ENCODE measurements at regions of chr3 and their contacts with region 1.

Region 1: DNA sequence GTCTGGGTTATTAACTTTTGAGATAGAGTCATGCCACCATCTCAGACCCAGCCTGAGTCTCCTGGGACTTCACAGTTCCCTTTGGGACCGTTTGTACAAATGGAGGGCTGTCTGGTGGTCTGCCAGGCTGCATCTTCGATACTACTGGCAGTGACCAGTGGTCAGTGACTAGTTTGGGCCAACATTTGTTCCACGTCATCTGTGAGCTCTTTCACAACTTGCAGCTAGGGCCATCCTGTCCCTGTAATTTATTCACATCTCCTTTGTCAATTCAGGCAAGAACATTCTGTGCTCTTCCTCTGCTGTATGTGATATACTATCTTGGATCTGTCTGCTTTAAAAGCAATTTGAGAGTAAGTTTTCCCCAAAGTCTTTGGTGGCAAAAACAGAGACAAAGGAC is 353.3 kb downstream of the EPHB1 start:
- DNase-seq: no peak
- H3K4me3 ChIP-seq: no peak overlapping the region
- H3K27ac ChIP-seq: no peak overlapping the region
- H3K4me1 ChIP-seq: no peaks in the 10 kb centered on the region
- H3K27me3 ChIP-seq: peaks cover 15% of the 10 kb centered on the region
- CTCF ChIP-seq: no peak

Region 2: GRCh38 chr3:134985864-134986715 is 162.3 kb before region 1 on chr3:
- CTCF ChIA-PET with region 1: no interaction called
- POLR2A ChIA-PET with region 1: no interaction called
- intact Hi-C with region 1: no loop called
- DNase-seq: no peak
- H3K4me3 ChIP-seq: no peak overlapping the region
- H3K27ac ChIP-seq: no peak overlapping the region
- H3K4me1 ChIP-seq: no peaks in the 10 kb centered on the region
- H3K27me3 ChIP-seq: peaks cover 7% of the 10 kb centered on the region
- CTCF ChIP-seq: no peak

Region 3: GRCh38 chr3:135272026-135272669 is 123.8 kb after region 1 on chr3:
- CTCF ChIA-PET with region 1: no interaction called
- POLR2A ChIA-PET with region 1: no interaction called
- intact Hi-C with region 1: no loop called
- DNase-seq: no peak
- H3K4me3 ChIP-seq: no peak overlapping the region
- H3K27ac ChIP-seq: no peak overlapping the region
- H3K4me1 ChIP-seq: no peaks in the 10 kb centered on the region
- H3K27me3 ChIP-seq: peaks cover 6% of the 10 kb centered on the region
- CTCF ChIP-seq: no peak

Region 4: GRCh38 chr3:135304378-135304777 is 156.0 kb after region 1 on chr3:
- CTCF ChIA-PET with region 1: no interaction called
- POLR2A ChIA-PET with region 1: no interaction called
- intact Hi-C with region 1: loop called (anchors 5 kb)
- DNase-seq: no peak
- H3K4me3 ChIP-seq: no peak overlapping the region
- H3K27ac ChIP-seq: no peak overlapping the region
- H3K4me1 ChIP-seq: no peaks in the 10 kb centered on the region
- H3K27me3 ChIP-seq: no peaks in the 10 kb centered on the region
- CTCF ChIP-seq: no peak

Measured in A673 (cell line).